Activated CD4-positive, alpha-beta T cell treated with anti-CD3 and anti-CD28 coated beads for 36 hours (primary cell): ENCODE measurements at regions of chr5 and their contacts with region 1.

Region 1: GRCh38 chr5:90783460-90784333 is 225.1 kb downstream of the ADGRV1 start:
- DNase-seq: peak; percentile 81
- ATAC-seq: peak; percentile 78
- H3K4me3 Mint-ChIP-seq: no peak overlapping the region
- H3K27ac Mint-ChIP-seq: no peak overlapping the region
- H3K4me1 Mint-ChIP-seq: no peaks in the 10 kb centered on the region
- H3K27me3 Mint-ChIP-seq: peaks cover 4% of the 10 kb centered on the region

Region 2: DNA sequence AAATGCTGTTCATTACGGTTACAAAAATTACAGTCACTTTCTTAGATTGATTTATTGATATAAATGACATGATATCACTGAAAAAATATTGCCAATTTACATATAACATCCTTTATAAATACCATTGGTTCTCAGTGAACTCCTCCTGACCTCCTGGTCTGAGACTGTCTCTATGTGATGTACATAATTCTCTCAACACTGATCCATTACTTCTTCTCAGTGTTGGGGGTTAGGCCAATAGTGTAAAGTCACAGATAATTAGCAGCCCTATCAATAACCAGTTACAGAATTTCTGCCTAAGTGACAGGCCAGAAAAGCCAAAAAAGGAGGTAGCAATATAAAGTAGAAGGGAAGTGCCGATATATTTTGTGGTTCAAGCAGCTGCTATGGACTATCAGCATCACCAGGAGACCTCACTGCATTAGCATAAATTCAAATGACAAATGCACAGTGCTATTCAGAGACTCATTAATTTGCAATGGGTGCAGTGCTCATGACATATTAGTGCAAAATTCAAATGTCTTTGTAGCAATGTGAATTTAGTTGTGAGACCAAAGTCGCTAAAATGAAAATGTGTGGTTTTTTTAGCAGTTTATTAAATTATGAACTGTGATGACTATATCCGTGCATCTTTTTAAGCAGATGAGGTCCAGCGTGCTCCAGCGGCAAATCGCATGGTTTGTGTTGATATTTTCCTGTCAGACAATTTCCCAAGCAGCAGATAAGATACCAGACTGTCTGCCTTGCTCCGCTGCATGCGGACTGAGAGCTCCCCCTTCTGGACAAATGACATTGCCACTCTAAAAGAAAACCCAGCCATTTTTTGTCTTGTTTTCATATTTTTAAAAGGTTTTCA is 518.8 kb before region 1 on chr5:
- CTCF ChIA-PET with region 1: no interaction called
- POLR2A ChIA-PET with region 1: no interaction called
- intact Hi-C with region 1: loop called (anchors 10 kb)
- DNase-seq: peak; percentile 72
- ATAC-seq: peak; percentile 53
- H3K4me3 Mint-ChIP-seq: no peak overlapping the region
- H3K27ac Mint-ChIP-seq: no peak overlapping the region
- H3K4me1 Mint-ChIP-seq: no peaks in the 10 kb centered on the region
- H3K27me3 Mint-ChIP-seq: peaks cover 8% of the 10 kb centered on the region

Region 3: DNA sequence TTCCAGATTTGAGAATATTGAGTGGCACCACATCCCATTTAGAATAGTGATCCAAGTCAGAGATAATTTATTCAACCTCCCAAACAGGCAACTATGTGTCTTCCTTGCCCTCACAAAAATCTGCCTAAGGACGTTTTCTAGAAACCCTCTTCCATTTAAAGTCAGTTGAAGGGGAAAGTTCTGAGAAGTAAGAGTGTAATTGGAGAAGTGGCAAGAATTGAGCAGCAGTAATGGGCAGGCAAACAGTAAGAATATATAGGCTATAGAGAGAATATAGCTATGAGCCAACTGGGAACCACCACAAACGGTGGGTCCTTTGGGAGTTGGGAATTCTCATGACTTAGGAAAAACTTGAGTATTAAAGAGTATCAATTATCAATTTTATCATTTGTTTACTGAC is 343.1 kb before region 1 on chr5:
- CTCF ChIA-PET with region 1: interaction called, 12 read pairs
- POLR2A ChIA-PET with region 1: no interaction called
- intact Hi-C with region 1: loop called (anchors 1 kb)
- DNase-seq: no peak
- ATAC-seq: no peak
- H3K4me3 Mint-ChIP-seq: peak overlapping the region; percentile 51
- H3K27ac Mint-ChIP-seq: no peak overlapping the region
- H3K4me1 Mint-ChIP-seq: peaks cover 4% of the 10 kb centered on the region
- H3K27me3 Mint-ChIP-seq: peaks cover 5% of the 10 kb centered on the region

Region 4: DNA sequence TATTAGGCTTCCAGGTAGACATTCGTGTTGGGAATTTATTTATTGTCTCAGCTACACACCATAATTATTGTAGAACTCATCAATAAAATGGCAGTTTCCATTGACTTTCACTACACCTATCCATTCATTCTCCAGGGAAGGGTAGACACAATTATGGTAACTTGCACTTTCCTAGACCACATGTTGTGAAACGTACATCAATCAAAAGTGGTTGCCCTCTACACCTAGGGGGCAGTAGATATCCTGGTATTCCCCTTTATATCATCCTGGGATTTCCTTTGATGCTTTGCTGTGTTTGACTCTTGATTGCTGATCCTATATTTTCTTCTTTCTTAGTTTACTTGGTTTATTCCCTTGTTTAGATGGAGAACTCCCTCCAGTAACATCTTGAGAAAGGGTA is 177.2 kb before region 1 on chr5:
- CTCF ChIA-PET with region 1: no interaction called
- POLR2A ChIA-PET with region 1: no interaction called
- intact Hi-C with region 1: loop called in 1 of 2 experiments (anchors 5 kb)
- DNase-seq: no peak
- ATAC-seq: no peak
- H3K4me3 Mint-ChIP-seq: no peak overlapping the region
- H3K27ac Mint-ChIP-seq: no peak overlapping the region
- H3K4me1 Mint-ChIP-seq: no peaks in the 10 kb centered on the region
- H3K27me3 Mint-ChIP-seq: peaks cover 17% of the 10 kb centered on the region

Region 5: GRCh38 chr5:90767710-90768109 is 16.0 kb before region 1 on chr5:
- CTCF ChIA-PET with region 1: interaction called, 14 read pairs
- POLR2A ChIA-PET with region 1: no interaction called
- intact Hi-C with region 1: no loop called
- DNase-seq: no peak
- ATAC-seq: no peak
- H3K4me3 Mint-ChIP-seq: no peak overlapping the region
- H3K27ac Mint-ChIP-seq: no peak overlapping the region
- H3K4me1 Mint-ChIP-seq: no peaks in the 10 kb centered on the region
- H3K27me3 Mint-ChIP-seq: peaks cover 8% of the 10 kb centered on the region

Region 6: GRCh38 chr5:90854169-90854568 is 70.5 kb after region 1 on chr5:
- CTCF ChIA-PET with region 1: no interaction called
- POLR2A ChIA-PET with region 1: no interaction called
- intact Hi-C with region 1: no loop called
- DNase-seq: no peak
- ATAC-seq: no peak
- H3K4me3 Mint-ChIP-seq: no peak overlapping the region
- H3K27ac Mint-ChIP-seq: no peak overlapping the region
- H3K4me1 Mint-ChIP-seq: no peaks in the 10 kb centered on the region
- H3K27me3 Mint-ChIP-seq: no peaks in the 10 kb centered on the region